ENCODE measurements at regions of chr21 and their contacts with region 1.

Region 1: DNA sequence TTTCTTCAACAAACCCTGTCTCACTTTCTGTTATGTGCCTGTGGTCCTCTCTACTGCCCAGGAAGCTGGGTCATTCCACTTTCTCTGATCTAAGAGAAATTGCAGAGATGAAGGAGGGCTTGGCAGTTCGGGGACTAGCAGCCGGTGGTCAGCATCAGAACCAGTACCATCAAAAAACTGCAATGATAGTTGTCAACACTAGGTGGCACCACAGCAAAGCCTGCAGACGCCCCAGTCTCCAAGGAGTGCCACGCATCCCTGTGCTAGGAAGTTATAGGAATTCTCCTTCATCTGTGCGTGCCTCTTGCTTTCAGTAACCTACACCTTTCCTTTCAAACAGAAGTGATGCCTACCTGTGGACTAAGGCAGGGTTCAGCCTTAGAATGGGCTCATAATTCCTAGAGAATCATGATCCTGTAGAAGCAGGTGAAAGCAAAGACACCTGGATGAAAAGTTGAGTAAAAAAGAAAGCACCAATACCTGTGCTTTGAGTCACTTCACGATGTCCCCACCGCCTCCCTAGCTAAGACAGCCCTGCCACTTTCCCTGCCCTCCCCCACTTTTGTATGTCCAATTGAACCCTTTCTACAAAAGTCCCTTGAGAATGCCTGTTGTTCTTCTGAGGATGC is 129.2 kb downstream of the ADAMTS1 start:
- DNase-seq: peak; percentile 39 to 74
- H3K4me3 ChIP-seq: no peak overlapping the region
- H3K4me1 ChIP-seq: no peaks in the 10 kb centered on the region
- H3K27me3 ChIP-seq: no peaks in the 10 kb centered on the region

Region 2: GRCh38 chr21:25607151-25608043 is 1108.6 kb before region 1 on chr21 and contains the start of gene MRPL39:
- in situ Hi-C with region 1: loop called (anchors 25 kb)
- DNase-seq: peak; percentile 86 to 96
- H3K4me3 ChIP-seq: peak within 1 kb of the TSS; percentile 94
- H3K4me1 ChIP-seq: peaks cover 12% of the 10 kb centered on the region
- H3K27me3 ChIP-seq: no peaks in the 10 kb centered on the region

Region 3: DNA sequence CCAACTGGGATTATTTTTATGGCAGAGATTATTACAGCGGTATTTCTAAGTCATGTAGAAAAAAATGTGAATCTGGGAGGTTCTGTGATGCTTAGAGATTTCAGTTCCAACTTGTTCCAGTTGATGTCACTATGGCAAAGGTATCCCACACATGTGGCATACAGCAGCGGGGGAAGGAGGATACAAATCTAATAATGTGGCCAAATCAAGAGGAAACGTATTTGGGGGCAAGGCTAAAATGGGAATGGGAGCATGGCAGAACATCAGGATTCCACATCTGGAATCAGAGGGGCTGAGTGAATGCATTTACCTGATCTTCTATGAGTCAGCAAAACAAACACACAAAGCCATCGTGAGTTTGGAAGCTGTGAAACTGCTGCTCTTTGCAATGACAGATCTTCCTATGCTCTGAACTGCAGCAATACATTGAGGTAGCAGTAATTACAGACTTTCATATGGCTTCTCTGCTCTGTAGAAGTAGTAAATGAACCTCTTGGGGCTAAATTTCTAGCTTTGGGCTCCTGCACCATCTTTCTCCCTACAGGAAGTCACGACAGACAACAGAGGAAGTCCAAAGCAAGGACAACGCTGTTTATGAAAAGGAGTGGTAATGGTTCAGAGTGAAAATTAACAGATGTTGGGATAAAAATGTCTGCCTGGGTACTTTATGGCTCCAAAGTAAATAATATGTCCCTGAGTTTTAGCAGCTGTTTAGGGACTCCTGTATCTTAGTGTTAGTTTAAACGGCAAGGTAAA is 925.7 kb before region 1 on chr21:
- in situ Hi-C with region 1: loop called (anchors 25 kb)
- DNase-seq: peak; percentile 35 to 47
- H3K4me3 ChIP-seq: no peak overlapping the region
- H3K4me1 ChIP-seq: peaks cover 9% of the 10 kb centered on the region
- H3K27me3 ChIP-seq: peaks cover 8% of the 10 kb centered on the region

Region 4: DNA sequence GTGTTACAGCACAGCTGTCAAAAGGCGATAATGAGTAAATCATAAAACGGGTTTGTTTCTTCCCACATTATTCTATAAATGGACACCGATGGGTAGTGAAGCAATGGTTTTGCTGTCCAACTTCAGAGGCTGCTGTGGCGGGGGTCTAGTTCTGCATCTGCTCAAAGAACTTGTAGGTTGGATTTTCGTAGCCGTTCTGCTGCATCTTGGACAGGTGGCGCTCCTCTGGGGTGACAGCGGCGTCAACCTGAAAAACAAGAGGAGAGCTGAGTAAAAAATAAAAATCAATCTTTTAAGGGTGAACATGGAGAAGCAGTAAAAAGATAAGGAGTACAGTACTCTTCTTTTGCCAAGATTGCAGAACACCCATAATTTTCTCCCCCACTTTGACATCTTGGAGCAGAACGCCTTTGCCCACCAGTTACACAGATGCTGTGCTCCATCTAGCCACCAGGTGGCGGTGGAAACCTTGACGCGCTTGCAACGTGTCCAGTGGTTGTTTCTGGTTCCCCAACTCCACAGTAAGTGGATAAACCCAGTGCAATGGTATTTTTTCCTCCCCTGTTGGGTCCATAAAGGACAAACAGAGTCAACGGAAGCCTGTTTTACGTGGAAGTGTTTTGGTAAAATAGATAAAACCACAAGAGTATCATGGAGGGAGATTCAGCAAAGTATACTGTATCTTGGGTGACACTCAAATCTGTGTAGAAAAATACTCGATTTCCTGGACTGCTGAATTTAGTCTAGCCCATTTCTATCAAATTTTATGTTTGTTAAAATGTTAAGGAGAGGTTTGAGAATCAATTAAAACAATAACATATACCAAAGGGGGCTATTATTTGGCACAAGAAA is 834.2 kb before region 1 on chr21:
- in situ Hi-C with region 1: loop called (anchors 5 kb)
- DNase-seq: peak; percentile 41 to 78
- H3K4me3 ChIP-seq: no peak overlapping the region
- H3K4me1 ChIP-seq: no peaks in the 10 kb centered on the region
- H3K27me3 ChIP-seq: no peaks in the 10 kb centered on the region

Measured in HAP-1 (cell line).